K562 (cell line): ENCODE measurements at regions of chr3 and their contacts with region 1.

Region 1: DNA sequence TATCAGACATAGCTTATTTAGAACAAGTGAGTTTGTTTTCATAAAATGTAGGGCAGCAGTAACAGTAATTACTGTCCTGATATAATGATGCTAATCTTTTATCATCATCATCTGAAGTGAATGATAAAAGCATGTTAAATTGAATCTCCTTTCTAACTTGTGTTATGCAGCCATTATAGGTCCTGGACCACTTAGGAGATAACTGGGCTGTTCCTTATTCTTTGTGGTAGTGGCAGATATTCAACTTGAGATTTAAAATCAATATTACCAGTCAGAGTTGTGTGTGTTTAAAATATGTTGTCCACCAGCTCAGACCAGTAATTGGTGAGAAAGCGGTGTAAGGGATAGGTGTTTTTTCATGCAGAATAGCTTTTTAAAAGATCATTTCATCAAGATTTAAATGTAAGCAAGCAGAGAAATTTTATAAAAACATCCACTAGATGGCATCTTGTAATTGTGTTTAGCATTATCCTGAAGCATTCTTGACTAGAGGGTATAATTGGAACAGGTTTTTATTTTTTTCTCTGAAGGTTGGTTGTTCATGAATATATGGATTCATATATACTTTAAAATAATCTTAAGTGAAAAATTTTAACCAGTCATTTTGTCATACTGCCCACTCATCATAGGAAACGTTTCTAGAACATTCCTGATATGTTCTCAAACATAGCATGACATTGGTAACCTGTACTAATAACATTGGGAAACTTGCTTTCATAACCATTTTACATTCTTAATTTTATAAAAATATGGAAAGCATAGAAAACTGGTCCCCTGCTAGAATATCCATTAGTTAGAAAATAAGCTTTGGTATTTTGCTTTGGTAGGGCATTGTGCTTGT is 153.9 kb downstream of the BBX start:
- DNase-seq: peak in 1 of 4 experiments; percentile 4
- ATAC-seq: no peak
- H3K4me3 ChIP-seq: no peak overlapping the region
- H3K27ac ChIP-seq: no peak overlapping the region
- H3K4me1 ChIP-seq: no peaks in the 10 kb centered on the region
- H3K27me3 ChIP-seq: no peaks in the 10 kb centered on the region
- CTCF ChIP-seq: peak in 2 of 3 experiments; percentile 34 to 52; a peak in 3 of 6 replicates
- EP300 ChIP-seq: no peak
- POLR2A ChIP-seq: no peak
- RAD21 ChIP-seq: peak; percentile 41 to 53; a peak in 3 of 4 replicates

Region 2: GRCh38 chr3:107740992-107741896 is 64.6 kb after region 1 on chr3:
- CTCF ChIA-PET with region 1: interaction called, 3 read pairs
- POLR2A ChIA-PET with region 1: no interaction called
- in situ Hi-C with region 1: no loop called
- intact Hi-C with region 1: loop called (anchors 5 kb)
- DNase-seq: peak in 1 of 4 experiments; percentile 3
- ATAC-seq: no peak
- H3K4me3 ChIP-seq: no peak overlapping the region
- H3K27ac ChIP-seq: no peak overlapping the region
- H3K4me1 ChIP-seq: no peaks in the 10 kb centered on the region
- H3K27me3 ChIP-seq: no peaks in the 10 kb centered on the region
- CTCF ChIP-seq: peak in 2 of 3 experiments; percentile 18 to 57; a peak in 3 of 6 replicates
- EP300 ChIP-seq: no peak
- POLR2A ChIP-seq: no peak
- RAD21 ChIP-seq: peak; percentile 52 to 57